Caco-2 (cell line): ENCODE measurements at regions of chr11 and their contacts with region 1.

Region 1: DNA sequence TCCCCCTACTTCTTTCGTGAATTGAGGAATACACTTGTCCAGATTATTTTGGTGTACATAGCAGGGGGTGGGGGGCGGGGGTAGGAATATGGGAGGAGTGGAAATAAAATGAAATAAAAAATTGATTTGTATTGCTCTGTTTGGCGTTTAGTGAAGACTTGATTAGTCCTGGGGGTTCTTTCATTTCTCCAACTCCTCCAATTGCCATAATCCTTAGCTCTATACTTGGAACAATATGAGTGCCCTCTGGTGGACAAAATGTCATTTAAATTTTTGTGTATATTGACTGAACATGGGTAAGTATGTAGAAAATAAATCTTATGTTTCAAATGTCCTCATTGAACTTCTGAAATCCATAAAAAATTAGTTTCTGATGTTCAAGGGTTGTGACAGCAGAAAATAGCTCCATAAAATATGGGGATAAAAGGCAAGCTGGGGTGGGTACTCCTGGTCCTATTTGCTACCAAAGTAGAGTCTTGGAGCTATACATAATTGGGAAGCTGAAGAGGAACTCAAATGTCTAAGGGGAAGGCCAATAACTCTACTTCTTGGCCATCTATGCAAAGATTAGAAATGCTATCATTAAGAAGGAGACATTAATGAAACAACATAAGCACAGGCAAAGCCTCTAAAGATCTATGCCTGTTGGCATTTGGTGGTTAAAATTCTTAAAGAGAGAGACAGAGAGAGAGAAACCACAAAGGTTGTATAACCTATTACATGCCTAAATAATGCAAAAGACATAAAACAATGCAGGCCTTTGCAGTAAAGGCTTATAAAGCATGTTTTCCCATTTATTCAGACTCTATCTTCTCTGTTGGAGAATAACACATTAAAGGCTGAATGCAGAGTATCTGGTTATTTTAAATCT is 421.6 kb downstream of the METTL15 start:
- DNase-seq: peak in 1 of 2 experiments; percentile 45
- H3K4me3 ChIP-seq: no peak overlapping the region
- H3K4me3 Mint-ChIP-seq: no peak overlapping the region
- H3K27ac Mint-ChIP-seq: no peak overlapping the region
- H3K4me1 ChIP-seq: no peaks in the 10 kb centered on the region
- H3K4me1 Mint-ChIP-seq: no peaks in the 10 kb centered on the region
- H3K27me3 ChIP-seq: no peaks in the 10 kb centered on the region
- H3K27me3 Mint-ChIP-seq: no peaks in the 10 kb centered on the region
- CTCF ChIP-seq: peak; percentile 39 to 47

Region 2: DNA sequence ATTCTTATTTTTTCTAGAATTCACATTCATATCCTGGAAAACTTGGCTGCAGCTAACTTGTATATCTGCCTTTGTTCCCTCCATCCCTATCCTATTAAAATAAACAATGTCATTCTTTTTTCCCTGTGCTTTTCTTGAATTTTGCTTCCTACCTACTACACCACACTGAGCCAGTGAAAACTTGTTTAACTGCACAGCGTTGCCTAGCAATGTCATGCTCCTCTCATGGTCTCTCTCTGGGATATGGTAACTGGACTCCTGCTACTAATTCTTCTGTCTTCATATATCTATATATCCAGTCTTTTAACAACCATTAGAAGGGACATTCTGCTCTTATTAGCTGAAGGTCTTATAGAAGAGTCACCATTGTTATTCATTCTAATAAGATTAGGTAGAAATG is 12.8 kb after region 1 on chr11:
- CTCF ChIA-PET with region 1: no interaction called
- POLR2A ChIA-PET with region 1: no interaction called
- intact Hi-C with region 1: no loop called
- DNase-seq: no peak
- H3K4me3 ChIP-seq: no peak overlapping the region
- H3K4me3 Mint-ChIP-seq: no peak overlapping the region
- H3K27ac Mint-ChIP-seq: no peak overlapping the region
- H3K4me1 ChIP-seq: no peaks in the 10 kb centered on the region
- H3K4me1 Mint-ChIP-seq: peaks cover 6% of the 10 kb centered on the region
- H3K27me3 ChIP-seq: no peaks in the 10 kb centered on the region
- H3K27me3 Mint-ChIP-seq: no peaks in the 10 kb centered on the region
- CTCF ChIP-seq: no peak

Region 3: DNA sequence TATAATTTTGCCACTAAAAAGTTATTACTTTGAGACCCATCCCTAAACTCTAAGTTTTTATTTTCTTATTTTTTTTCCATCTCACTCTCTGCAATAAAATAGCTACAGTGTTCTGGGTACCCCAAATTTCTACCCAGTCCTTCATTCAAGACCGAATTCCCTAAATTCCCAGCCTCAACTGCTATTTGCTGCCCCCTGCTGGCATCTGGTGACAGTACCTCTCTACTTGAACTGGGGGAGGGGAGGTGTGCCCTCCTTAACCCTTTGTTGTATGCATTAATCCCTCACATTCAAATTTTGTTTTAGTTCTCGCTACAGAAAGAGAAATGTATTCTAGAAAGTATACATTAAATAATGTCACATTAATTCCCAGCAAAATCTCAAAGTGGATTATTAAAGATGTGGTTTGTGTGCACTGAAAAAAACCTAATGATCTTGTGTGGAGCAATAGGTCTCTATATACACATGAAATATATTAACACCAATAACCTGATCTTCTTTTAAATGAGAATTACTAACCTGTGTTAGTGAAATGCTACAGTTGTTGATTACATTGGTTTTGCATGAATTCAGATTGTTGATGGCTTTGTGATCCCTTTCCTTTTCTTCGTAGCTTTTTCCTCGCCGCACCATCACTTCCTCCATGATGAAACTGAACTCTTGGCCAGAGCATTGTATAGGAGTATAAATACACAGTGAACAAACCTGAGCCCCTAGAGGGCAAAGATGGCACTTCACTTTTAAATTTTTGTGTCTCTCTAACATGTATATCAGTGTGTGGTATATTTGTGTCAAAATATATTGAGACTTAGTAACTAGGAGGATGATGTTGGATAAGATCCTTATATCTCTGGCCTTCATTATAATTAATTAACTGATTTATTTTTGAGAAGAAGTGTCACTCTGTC is 168.4 kb after region 1 on chr11:
- CTCF ChIA-PET with region 1: no interaction called
- POLR2A ChIA-PET with region 1: no interaction called
- intact Hi-C with region 1: loop called (anchors 10 kb)
- DNase-seq: peak; percentile 63 to 77
- H3K4me3 ChIP-seq: no peak overlapping the region
- H3K4me3 Mint-ChIP-seq: no peak overlapping the region
- H3K27ac Mint-ChIP-seq: peak overlapping the region; percentile 7
- H3K4me1 ChIP-seq: peaks cover 3% of the 10 kb centered on the region; the same call in 1 of the 2 replicates
- H3K4me1 Mint-ChIP-seq: peaks cover 23% of the 10 kb centered on the region
- H3K27me3 ChIP-seq: no peaks in the 10 kb centered on the region
- H3K27me3 Mint-ChIP-seq: no peaks in the 10 kb centered on the region
- CTCF ChIP-seq: peak; percentile 84 to 90